Caco-2 (cell line): ENCODE measurements at regions of chr5 and their contacts with region 1.

Region 1: DNA sequence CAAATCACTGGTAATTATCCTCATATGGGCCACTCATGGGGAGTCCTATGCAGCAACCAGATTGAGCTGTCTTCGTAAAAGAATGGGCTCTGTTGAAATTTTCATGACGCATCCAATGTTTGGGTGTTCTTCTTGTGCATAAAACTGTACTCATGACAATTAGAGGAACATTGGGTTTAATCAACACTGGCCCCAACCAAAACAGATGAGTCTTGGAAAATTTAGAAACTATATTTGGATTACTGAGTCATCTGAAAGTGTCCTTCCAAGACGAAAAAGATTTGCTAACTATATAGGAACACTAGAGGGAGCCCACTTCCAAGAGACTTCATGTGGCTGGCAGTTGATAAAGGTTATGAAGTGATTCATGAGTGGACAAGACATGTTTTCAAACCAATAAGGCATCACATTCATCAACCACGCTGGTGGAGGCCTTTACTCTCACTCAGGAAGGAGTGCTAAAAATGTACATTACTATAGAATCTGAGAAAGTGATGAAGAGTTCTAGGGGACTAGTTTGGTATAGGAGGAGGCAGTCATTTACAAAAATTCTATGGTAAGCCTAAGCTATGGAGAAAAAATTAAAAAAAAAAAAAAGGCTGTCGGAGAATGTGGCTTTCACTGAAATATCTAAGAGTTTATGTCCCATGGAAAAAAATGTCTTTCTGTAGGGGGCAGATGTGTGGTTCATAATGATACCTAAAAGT is 313.5 kb downstream of the PRDM9 start:
- DNase-seq: peak in 1 of 2 experiments; percentile 22
- H3K4me3 ChIP-seq: no peak overlapping the region
- H3K4me3 Mint-ChIP-seq: no peak overlapping the region
- H3K27ac Mint-ChIP-seq: no peak overlapping the region
- H3K4me1 ChIP-seq: no peaks in the 10 kb centered on the region
- H3K4me1 Mint-ChIP-seq: no peaks in the 10 kb centered on the region
- H3K27me3 ChIP-seq: no peaks in the 10 kb centered on the region
- H3K27me3 Mint-ChIP-seq: peaks cover 2% of the 10 kb centered on the region
- CTCF ChIP-seq: peak; percentile 49 to 56

Region 2: GRCh38 chr5:23994581-23995370 is 173.9 kb after region 1 on chr5:
- CTCF ChIA-PET with region 1: no interaction called
- POLR2A ChIA-PET with region 1: no interaction called
- intact Hi-C with region 1: loop called (anchors 1 kb)
- DNase-seq: peak in 1 of 2 experiments; percentile 20
- H3K4me3 ChIP-seq: no peak overlapping the region
- H3K4me3 Mint-ChIP-seq: no peak overlapping the region
- H3K27ac Mint-ChIP-seq: no peak overlapping the region
- H3K4me1 ChIP-seq: peaks cover 13% of the 10 kb centered on the region; the same call in 1 of the 2 replicates
- H3K4me1 Mint-ChIP-seq: peaks cover 7% of the 10 kb centered on the region
- H3K27me3 ChIP-seq: no peaks in the 10 kb centered on the region
- H3K27me3 Mint-ChIP-seq: no peaks in the 10 kb centered on the region
- CTCF ChIP-seq: peak; percentile 28 to 31

Region 3: GRCh38 chr5:24118351-24118750 is 297.4 kb after region 1 on chr5:
- CTCF ChIA-PET with region 1: no interaction called
- POLR2A ChIA-PET with region 1: no interaction called
- intact Hi-C with region 1: no loop called
- DNase-seq: no peak
- H3K4me3 ChIP-seq: no peak overlapping the region
- H3K4me3 Mint-ChIP-seq: no peak overlapping the region
- H3K27ac Mint-ChIP-seq: no peak overlapping the region
- H3K4me1 ChIP-seq: no peaks in the 10 kb centered on the region
- H3K4me1 Mint-ChIP-seq: no peaks in the 10 kb centered on the region
- H3K27me3 ChIP-seq: no peaks in the 10 kb centered on the region
- H3K27me3 Mint-ChIP-seq: no peaks in the 10 kb centered on the region
- CTCF ChIP-seq: no peak

Region 4: GRCh38 chr5:24749701-24750100 is 928.8 kb after region 1 on chr5:
- CTCF ChIA-PET with region 1: no interaction called
- POLR2A ChIA-PET with region 1: no interaction called
- intact Hi-C with region 1: no loop called
- DNase-seq: no peak
- H3K4me3 ChIP-seq: no peak overlapping the region
- H3K4me3 Mint-ChIP-seq: no peak overlapping the region
- H3K27ac Mint-ChIP-seq: no peak overlapping the region
- H3K4me1 ChIP-seq: no peaks in the 10 kb centered on the region
- H3K4me1 Mint-ChIP-seq: no peaks in the 10 kb centered on the region
- H3K27me3 ChIP-seq: no peaks in the 10 kb centered on the region
- H3K27me3 Mint-ChIP-seq: peaks cover 3% of the 10 kb centered on the region
- CTCF ChIP-seq: no peak